ENCODE measurements at regions of chr22 and their contacts with region 1.

Region 1: GRCh38 chr22:41091132-41092022 is 1.0 kb upstream of the EP300 start:
- DNase-seq: peak; percentile 98 to 99 (median 99)
- ATAC-seq: peak; percentile 95
- H3K4me3 ChIP-seq: peak overlapping the region; percentile 99
- H3K4me3 Mint-ChIP-seq: peak overlapping the region; percentile 91 to 100 (median 98)
- H3K27ac ChIP-seq: peak overlapping the region; percentile 99
- H3K27ac Mint-ChIP-seq: peak overlapping the region; percentile 99 to 100 (median 99)
- H3K4me1 ChIP-seq: peaks cover 4 to 5% of the 10 kb centered on the region in 2 donors
- H3K4me1 Mint-ChIP-seq: peaks cover 23 to 35% (median 27%) of the 10 kb centered on the region in 7 donors
- H3K27me3 ChIP-seq: no peaks in the 10 kb centered on the region
- H3K27me3 Mint-ChIP-seq: peaks cover 0 to 2% (median 0%) of the 10 kb centered on the region in 5 donors

Region 2: GRCh38 chr22:40463017-40463631 is 628.3 kb before region 1 on chr22:
- CTCF ChIA-PET with region 1: no interaction called
- POLR2A ChIA-PET with region 1: no interaction called
- intact Hi-C with region 1: no loop called
- DNase-seq: peak in 8 of 9 donors; percentile 36 to 65 (median 50)
- ATAC-seq: peak; percentile 88
- H3K4me3 ChIP-seq: peak overlapping the region; percentile 90
- H3K4me3 Mint-ChIP-seq: peak overlapping the region; percentile 87 to 97 (median 96)
- H3K27ac ChIP-seq: peak overlapping the region; percentile 80
- H3K27ac Mint-ChIP-seq: peak overlapping the region; percentile 93 to 99 (median 97)
- H3K4me1 ChIP-seq: peaks cover 41 to 53% of the 10 kb centered on the region in 2 donors
- H3K4me1 Mint-ChIP-seq: peaks cover 46 to 92% (median 76%) of the 10 kb centered on the region in 7 donors
- H3K27me3 ChIP-seq: no peaks in the 10 kb centered on the region
- H3K27me3 Mint-ChIP-seq: no peaks in the 10 kb centered on the region

Region 3: GRCh38 chr22:40636380-40637182 is 454.8 kb before region 1 on chr22 and contains the start of gene MRTFA:
- CTCF ChIA-PET with region 1: no interaction called
- POLR2A ChIA-PET with region 1: no interaction called
- intact Hi-C with region 1: loop called in 1 of 2 experiments (anchors 1 kb)
- DNase-seq: peak; percentile 90 to 99 (median 98)
- ATAC-seq: peak; percentile 96
- H3K4me3 ChIP-seq: peak within 1 kb of the TSS; percentile 84
- H3K4me3 Mint-ChIP-seq: peak within 1 kb of the TSS; percentile 94 to 100 (median 97)
- H3K27ac ChIP-seq: peak within 1 kb of the TSS; percentile 85
- H3K27ac Mint-ChIP-seq: peak within 1 kb of the TSS; percentile 96 to 99 (median 97)
- H3K4me1 ChIP-seq: peaks cover 14 to 27% of the 10 kb centered on the region in 2 donors
- H3K4me1 Mint-ChIP-seq: peaks cover 27 to 56% (median 44%) of the 10 kb centered on the region in 7 donors
- H3K27me3 ChIP-seq: no peaks in the 10 kb centered on the region
- H3K27me3 Mint-ChIP-seq: no peaks in the 10 kb centered on the region
- total RNA-seq, gene MRTFA: 64.0 to 114 (median 104) TPM

Region 4: GRCh38 chr22:40950962-40951794 is 140.2 kb before region 1 on chr22 and contains the start of gene RBX1:
- CTCF ChIA-PET with region 1: interaction called, 3 read pairs
- POLR2A ChIA-PET with region 1: interaction called, 109 read pairs
- intact Hi-C with region 1: loop called (anchors 1 kb)
- DNase-seq: peak; percentile 96 to 100 (median 99)
- ATAC-seq: peak; percentile 92
- H3K4me3 ChIP-seq: peak within 1 kb of the TSS; percentile 98
- H3K4me3 Mint-ChIP-seq: peak within 1 kb of the TSS; percentile 91 to 99 (median 98)
- H3K27ac ChIP-seq: peak within 1 kb of the TSS; percentile 99
- H3K27ac Mint-ChIP-seq: peak within 1 kb of the TSS; percentile 96 to 100 (median 99)
- H3K4me1 ChIP-seq: peaks cover 16 to 19% of the 10 kb centered on the region in 2 donors
- H3K4me1 Mint-ChIP-seq: peaks cover 20 to 43% (median 39%) of the 10 kb centered on the region in 7 donors
- H3K27me3 ChIP-seq: no peaks in the 10 kb centered on the region
- H3K27me3 Mint-ChIP-seq: no peaks in the 10 kb centered on the region
- total RNA-seq, gene RBX1: 28.9 to 91.3 (median 32.7) TPM

Region 5: DNA sequence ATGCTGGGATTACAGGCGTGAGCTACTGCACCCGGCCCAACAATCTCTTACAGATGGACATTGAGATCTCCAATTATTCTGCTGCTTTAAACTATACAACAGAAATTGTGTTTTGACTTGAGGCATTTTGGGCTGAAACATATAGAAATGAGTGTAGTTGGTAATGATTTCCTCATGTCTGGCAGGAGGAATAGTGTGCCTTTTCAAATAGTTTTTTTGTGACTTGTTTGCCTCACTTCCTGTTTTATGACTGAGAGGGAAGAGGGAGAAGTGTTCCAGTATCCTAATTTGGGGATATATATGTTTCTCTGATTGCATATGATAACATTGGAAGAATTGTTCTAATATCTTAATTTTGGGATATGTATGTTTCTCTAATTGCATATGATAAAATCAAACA is 41.2 kb after region 1 on chr22:
- CTCF ChIA-PET with region 1: no interaction called
- POLR2A ChIA-PET with region 1: no interaction called
- intact Hi-C with region 1: loop called in 1 of 2 experiments (anchors 5 kb)
- DNase-seq: no peak
- ATAC-seq: no peak
- H3K4me3 ChIP-seq: no peak overlapping the region
- H3K4me3 Mint-ChIP-seq: no peak overlapping the region
- H3K27ac ChIP-seq: no peak overlapping the region
- H3K27ac Mint-ChIP-seq: peak overlapping the region in 3 of 9 donors; percentile 52 to 81 (median 57)
- H3K4me1 ChIP-seq: no peaks in the 10 kb centered on the region
- H3K4me1 Mint-ChIP-seq: peaks cover 3 to 18% (median 6%) of the 10 kb centered on the region in 7 donors
- H3K27me3 ChIP-seq: no peaks in the 10 kb centered on the region
- H3K27me3 Mint-ChIP-seq: no peaks in the 10 kb centered on the region

Region 6: DNA sequence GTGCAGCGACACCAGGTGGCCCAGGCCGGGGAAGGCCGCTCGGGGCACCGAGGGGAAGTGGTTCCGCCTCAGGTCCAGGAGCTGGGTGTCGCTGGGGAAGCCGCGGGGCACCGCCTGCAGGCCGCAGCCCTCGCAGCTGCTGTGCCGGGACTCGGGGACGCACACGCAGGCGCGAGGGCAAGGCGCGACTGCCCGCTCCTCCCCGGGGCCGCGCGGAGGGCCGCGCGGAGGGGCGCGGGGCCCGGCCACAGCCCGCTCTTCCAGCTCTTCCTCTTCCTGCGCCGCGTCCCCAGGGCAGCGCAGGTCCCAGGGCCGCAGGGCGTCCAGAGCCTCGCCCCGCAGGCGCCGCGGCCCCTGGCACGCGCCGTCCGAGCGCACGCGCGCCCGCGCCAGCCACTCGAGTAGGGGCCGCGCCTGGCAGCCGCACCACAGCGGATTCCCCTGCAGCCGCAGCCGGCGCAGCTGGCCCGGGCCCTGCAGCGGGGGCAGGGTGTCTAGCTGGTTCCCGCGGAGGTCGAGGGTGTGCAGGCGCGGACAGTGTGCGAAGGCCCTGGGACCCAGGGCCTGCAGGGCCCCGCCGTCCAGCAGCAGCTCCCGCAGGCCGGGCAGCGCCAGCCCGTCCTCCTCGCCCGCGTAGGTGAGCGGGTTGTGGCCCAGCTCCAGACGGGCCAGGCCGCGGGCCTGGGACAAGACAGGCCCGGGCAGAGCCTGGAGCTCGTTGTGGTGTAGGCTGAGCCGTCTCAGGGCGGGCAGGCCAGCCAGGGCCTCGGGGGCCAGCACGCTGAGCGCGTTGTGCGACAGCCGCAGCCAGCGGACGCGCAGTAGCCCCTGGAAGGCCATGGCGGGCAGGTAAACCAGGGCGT is 146.6 kb after region 1 on chr22:
- CTCF ChIA-PET with region 1: no interaction called
- POLR2A ChIA-PET with region 1: interaction called, 7 read pairs
- intact Hi-C with region 1: loop called (anchors 1 to 5 kb)
- DNase-seq: peak; percentile 74 to 86 (median 84)
- ATAC-seq: peak; percentile 96
- H3K4me3 ChIP-seq: peak overlapping the region; percentile 10
- H3K4me3 Mint-ChIP-seq: peak overlapping the region in 9 of 10 donors; percentile 54 to 78 (median 73)
- H3K27ac ChIP-seq: peak overlapping the region; percentile 57
- H3K27ac Mint-ChIP-seq: peak overlapping the region in 2 of 9 donors; percentile 44 to 63
- H3K4me1 ChIP-seq: peaks cover 0 to 11% of the 10 kb centered on the region in 2 donors
- H3K4me1 Mint-ChIP-seq: peaks cover 5 to 19% (median 11%) of the 10 kb centered on the region in 7 donors
- H3K27me3 ChIP-seq: no peaks in the 10 kb centered on the region
- H3K27me3 Mint-ChIP-seq: peaks cover 0 to 2% (median 0%) of the 10 kb centered on the region in 5 donors

Region 7: DNA sequence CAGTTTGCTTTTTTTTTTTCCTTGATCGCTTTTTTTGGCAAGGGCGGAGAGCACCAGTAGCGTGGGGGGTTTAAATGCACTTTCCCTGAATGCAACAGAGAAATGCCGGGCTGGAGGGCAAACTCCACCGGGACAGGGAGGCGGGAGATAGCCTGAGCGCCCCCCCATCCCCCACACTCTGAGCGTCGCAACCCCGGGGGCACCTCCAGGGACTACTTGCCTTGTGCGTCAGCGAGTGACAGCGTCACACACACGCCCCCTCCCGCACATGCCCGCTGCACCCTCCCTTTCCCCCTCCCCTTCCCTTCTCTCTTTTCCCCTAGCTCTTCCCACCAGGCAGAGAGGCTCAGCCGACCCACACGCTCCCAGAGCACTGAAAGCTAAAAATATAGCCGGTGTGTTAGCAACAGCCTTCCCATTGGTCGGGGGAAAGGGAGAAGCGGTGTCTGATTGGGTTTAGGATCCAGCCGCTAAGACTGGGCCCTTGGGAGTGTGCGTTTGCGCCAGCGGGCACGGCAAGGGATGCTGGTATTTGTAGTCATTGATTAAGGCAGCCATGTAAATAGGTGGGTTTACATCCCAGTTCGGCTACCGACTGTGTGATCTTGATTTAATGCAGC is 356.9 kb after region 1 on chr22:
- CTCF ChIA-PET with region 1: no interaction called
- POLR2A ChIA-PET with region 1: no interaction called
- intact Hi-C with region 1: loop called in 1 of 2 experiments (anchors 1 kb)
- DNase-seq: peak; percentile 62 to 95 (median 92)
- ATAC-seq: peak; percentile 78
- H3K4me3 ChIP-seq: peak overlapping the region; percentile 90
- H3K4me3 Mint-ChIP-seq: peak overlapping the region; percentile 92 to 98 (median 94)
- H3K27ac ChIP-seq: peak overlapping the region; percentile 88
- H3K27ac Mint-ChIP-seq: peak overlapping the region; percentile 91 to 99 (median 94)
- H3K4me1 ChIP-seq: peaks cover 7% of the 10 kb centered on the region in 2 donors
- H3K4me1 Mint-ChIP-seq: peaks cover 6 to 25% (median 21%) of the 10 kb centered on the region in 7 donors
- H3K27me3 ChIP-seq: no peaks in the 10 kb centered on the region
- H3K27me3 Mint-ChIP-seq: no peaks in the 10 kb centered on the region

Region 8: GRCh38 chr22:41557401-41558240 is 466.2 kb after region 1 on chr22:
- CTCF ChIA-PET with region 1: no interaction called
- POLR2A ChIA-PET with region 1: no interaction called
- intact Hi-C with region 1: no loop called
- DNase-seq: no peak
- ATAC-seq: no peak
- H3K4me3 ChIP-seq: no peak overlapping the region
- H3K4me3 Mint-ChIP-seq: no peak overlapping the region
- H3K27ac ChIP-seq: no peak overlapping the region
- H3K27ac Mint-ChIP-seq: no peak overlapping the region
- H3K4me1 ChIP-seq: no peaks in the 10 kb centered on the region
- H3K4me1 Mint-ChIP-seq: peaks cover 0 to 9% (median 0%) of the 10 kb centered on the region in 7 donors
- H3K27me3 ChIP-seq: no peaks in the 10 kb centered on the region
- H3K27me3 Mint-ChIP-seq: peaks cover 12 to 59% (median 31%) of the 10 kb centered on the region in 5 donors

Region 9: GRCh38 chr22:42079319-42080251 is 988.2 kb after region 1 on chr22 and contains the start of gene SMDT1:
- CTCF ChIA-PET with region 1: no interaction called
- POLR2A ChIA-PET with region 1: no interaction called
- intact Hi-C with region 1: loop called in 1 of 2 experiments (anchors 10 kb)
- DNase-seq: peak; percentile 96 to 100 (median 99)
- ATAC-seq: peak; percentile 94
- H3K4me3 ChIP-seq: peak within 1 kb of the TSS; percentile 98
- H3K4me3 Mint-ChIP-seq: peak within 1 kb of the TSS; percentile 94 to 99 (median 96)
- H3K27ac ChIP-seq: peak within 1 kb of the TSS; percentile 97
- H3K27ac Mint-ChIP-seq: peak within 1 kb of the TSS; percentile 96 to 99 (median 99)
- H3K4me1 ChIP-seq: peaks cover 10 to 16% of the 10 kb centered on the region in 2 donors
- H3K4me1 Mint-ChIP-seq: peaks cover 9 to 52% (median 43%) of the 10 kb centered on the region in 7 donors
- H3K27me3 ChIP-seq: no peaks in the 10 kb centered on the region
- H3K27me3 Mint-ChIP-seq: no peaks in the 10 kb centered on the region
- total RNA-seq, gene SMDT1: 40.4 to 105 (median 98.8) TPM